ENCODE measurements at regions of chr1 and their contacts with region 1.

Region 1: DNA sequence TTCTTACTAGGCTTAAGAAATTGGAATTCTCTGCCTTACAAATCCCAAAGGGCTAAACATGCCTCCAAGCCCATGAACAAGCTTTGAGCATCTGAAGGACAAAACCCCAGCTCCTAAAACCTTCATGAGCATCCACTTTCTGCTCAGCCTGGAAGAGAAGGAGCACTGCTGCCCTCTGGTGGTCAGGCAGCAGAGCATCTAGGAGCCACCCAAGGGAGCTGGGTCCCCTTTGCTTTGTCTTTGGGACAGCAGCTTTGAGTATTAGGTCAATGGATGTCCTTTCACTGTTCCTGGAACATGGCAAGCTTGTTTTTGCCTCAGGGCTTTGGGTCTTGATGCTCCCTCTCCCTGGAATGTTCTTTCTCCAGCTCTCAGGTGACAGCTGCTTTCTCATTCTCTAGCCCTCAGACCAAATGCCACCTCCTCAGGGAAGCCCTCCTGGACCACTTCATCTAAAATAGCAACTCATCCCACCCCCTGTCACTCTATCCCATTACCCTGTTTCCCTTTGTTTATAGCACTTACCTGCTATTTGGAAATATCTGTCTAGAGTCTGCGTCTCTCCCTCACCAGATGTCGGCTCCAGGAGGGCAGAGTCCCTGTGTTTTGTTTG is 25.7 kb downstream of the RAB7B start:
- DNase-seq: peak; percentile 47 to 85 (median 78)
- ATAC-seq: peak; percentile 68
- H3K4me3 ChIP-seq: no peak overlapping the region
- H3K4me3 Mint-ChIP-seq: no peak overlapping the region
- H3K27ac ChIP-seq: no peak overlapping the region
- H3K27ac Mint-ChIP-seq: no peak overlapping the region
- H3K4me1 ChIP-seq: no peaks in the 10 kb centered on the region
- H3K4me1 Mint-ChIP-seq: no peaks in the 10 kb centered on the region
- H3K27me3 ChIP-seq: peaks cover 0 to 6% of the 10 kb centered on the region in 2 experiments
- H3K27me3 Mint-ChIP-seq: no peaks in the 10 kb centered on the region
- CTCF ChIP-seq: peak; percentile 87

Region 2: DNA sequence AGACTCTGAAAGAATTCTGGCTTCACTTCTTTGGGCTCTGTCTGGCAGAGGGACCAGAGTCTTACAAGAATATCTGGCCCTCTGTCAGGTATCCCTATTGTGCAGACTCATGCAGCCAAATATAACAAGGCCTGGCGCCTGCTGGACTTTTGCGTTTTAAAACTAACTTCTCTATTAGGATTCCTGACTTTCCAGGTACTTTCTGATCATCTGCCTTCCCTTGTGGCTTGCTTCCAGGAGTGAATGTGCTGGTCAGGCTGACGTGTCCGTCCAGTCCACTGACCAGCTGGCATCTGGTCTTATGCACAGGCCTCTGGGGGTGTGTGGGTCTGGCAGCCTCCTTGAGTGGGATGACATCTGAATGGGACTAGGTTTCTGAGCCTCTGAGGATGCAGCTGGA is 193.6 kb before region 1 on chr1:
- CTCF ChIA-PET with region 1: interaction called, 272 read pairs
- POLR2A ChIA-PET with region 1: no interaction called
- intact Hi-C with region 1: no loop called
- DNase-seq: no peak
- ATAC-seq: no peak
- H3K4me3 ChIP-seq: no peak overlapping the region
- H3K4me3 Mint-ChIP-seq: no peak overlapping the region
- H3K27ac ChIP-seq: no peak overlapping the region
- H3K27ac Mint-ChIP-seq: no peak overlapping the region
- H3K4me1 ChIP-seq: peaks cover 6% of the 10 kb centered on the region
- H3K4me1 Mint-ChIP-seq: peaks cover 6% of the 10 kb centered on the region
- H3K27me3 ChIP-seq: no peaks in the 10 kb centered on the region
- H3K27me3 Mint-ChIP-seq: no peaks in the 10 kb centered on the region
- CTCF ChIP-seq: no peak

Region 3: GRCh38 chr1:205805082-205805712 is 172.3 kb before region 1 on chr1:
- CTCF ChIA-PET with region 1: interaction called, 13 read pairs
- POLR2A ChIA-PET with region 1: no interaction called
- intact Hi-C with region 1: no loop called
- DNase-seq: peak in 4 of 9 experiments; percentile 20 to 46 (median 30)
- ATAC-seq: peak; percentile 62
- H3K4me3 ChIP-seq: peak overlapping the region in 1 of 2 experiments; percentile 31
- H3K4me3 Mint-ChIP-seq: peak overlapping the region; percentile 54
- H3K27ac ChIP-seq: peak overlapping the region; percentile 1 to 6
- H3K27ac Mint-ChIP-seq: peak overlapping the region; percentile 55
- H3K4me1 ChIP-seq: peaks cover 57% of the 10 kb centered on the region
- H3K4me1 Mint-ChIP-seq: peaks cover 67% of the 10 kb centered on the region
- H3K27me3 ChIP-seq: no peaks in the 10 kb centered on the region
- H3K27me3 Mint-ChIP-seq: no peaks in the 10 kb centered on the region
- CTCF ChIP-seq: no peak

Region 4: DNA sequence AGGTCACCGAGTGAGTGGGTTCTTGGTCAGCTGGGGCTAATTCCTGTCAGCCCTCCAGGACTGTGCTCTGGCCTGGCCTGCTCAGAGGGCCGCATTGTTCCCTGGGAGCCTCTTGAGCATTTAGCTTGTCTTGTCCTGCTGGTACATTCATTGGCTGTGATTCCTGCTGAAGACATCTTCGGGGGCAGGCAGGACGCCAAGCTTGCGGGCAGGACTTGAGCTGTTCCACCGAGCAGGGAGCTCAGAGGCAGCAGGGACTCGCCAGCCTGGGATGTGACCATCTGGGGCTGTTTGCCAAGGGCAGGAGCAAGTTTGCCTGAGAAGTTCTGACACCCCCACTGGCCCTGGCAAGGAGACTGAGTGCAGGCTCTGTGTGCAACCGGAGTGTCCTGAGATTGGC is 27.2 kb before region 1 on chr1:
- CTCF ChIA-PET with region 1: interaction called, 18 read pairs
- POLR2A ChIA-PET with region 1: no interaction called
- intact Hi-C with region 1: no loop called
- DNase-seq: no peak
- ATAC-seq: no peak
- H3K4me3 ChIP-seq: no peak overlapping the region
- H3K4me3 Mint-ChIP-seq: no peak overlapping the region
- H3K27ac ChIP-seq: no peak overlapping the region
- H3K27ac Mint-ChIP-seq: no peak overlapping the region
- H3K4me1 ChIP-seq: no peaks in the 10 kb centered on the region
- H3K4me1 Mint-ChIP-seq: no peaks in the 10 kb centered on the region
- H3K27me3 ChIP-seq: no peaks in the 10 kb centered on the region
- H3K27me3 Mint-ChIP-seq: no peaks in the 10 kb centered on the region
- CTCF ChIP-seq: no peak

Region 5: DNA sequence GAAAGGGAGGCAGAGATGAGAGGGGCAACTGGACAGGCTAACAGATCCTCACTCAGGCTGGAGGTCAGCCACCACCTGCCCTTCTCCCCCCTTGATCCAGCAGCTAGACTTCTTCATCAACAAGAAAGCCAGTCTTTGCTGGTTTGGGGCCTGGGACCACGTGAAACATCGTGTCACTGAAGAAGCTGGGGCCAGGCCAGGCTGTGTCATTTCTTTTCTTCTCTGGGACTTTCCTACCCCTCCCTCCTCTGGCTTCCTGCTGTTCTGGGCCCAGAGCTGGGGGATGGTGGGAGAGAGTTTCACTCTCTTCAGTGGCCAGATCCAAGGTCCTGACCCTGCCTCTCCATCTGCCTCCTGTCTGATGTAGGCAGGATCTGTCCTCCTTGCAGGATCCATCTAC is 16.1 kb before region 1 on chr1:
- CTCF ChIA-PET with region 1: interaction called, 57 read pairs
- POLR2A ChIA-PET with region 1: no interaction called
- intact Hi-C with region 1: no loop called
- DNase-seq: no peak
- ATAC-seq: no peak
- H3K4me3 ChIP-seq: no peak overlapping the region
- H3K4me3 Mint-ChIP-seq: no peak overlapping the region
- H3K27ac ChIP-seq: no peak overlapping the region
- H3K27ac Mint-ChIP-seq: no peak overlapping the region
- H3K4me1 ChIP-seq: no peaks in the 10 kb centered on the region
- H3K4me1 Mint-ChIP-seq: no peaks in the 10 kb centered on the region
- H3K27me3 ChIP-seq: no peaks in the 10 kb centered on the region
- H3K27me3 Mint-ChIP-seq: peaks cover 10% of the 10 kb centered on the region
- CTCF ChIP-seq: no peak